ENCODE measurements at regions of chr7 and their contacts with region 1.

Region 1: DNA sequence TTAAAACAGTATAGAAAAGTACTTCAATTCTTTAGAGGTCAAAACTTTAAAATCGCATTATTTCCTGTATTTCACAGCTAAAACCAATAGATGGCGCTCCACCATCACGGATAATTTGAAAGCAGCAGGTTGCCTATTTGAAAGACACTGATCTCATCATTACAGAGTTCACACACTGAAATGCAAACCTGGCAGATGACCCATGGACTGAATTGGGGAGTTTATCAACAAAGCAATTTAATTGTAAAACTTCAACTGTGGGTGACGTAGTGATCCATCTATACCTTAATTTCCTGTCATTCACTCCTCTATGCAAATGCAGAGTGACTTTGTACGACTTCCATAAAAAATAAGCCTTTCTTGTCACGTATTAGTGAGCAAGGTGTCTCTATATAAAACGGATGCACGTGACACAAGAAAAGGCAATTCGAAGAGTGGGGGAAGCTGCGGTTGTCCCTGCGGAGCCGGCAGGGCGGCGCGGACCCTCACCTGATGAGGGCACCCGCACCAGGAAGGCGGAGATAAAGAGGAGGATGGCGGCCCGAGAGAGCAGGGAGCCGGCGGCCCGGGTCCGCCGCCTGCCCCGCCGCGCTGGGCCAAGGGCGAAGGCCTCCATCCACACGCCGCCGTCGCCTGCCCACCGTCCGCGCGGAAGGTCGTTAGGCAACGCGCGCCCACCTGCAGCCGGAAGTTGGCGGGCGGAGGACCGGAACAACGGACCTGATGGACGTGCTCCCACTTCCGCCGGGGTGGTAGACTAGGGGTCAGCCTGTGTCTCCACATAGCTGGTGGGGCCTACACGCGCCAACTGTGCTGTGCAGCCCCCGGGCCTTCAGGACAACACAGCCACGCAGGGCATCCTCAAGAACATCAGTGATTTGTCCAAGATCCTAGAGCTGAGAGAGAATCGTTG is at the start of gene ZPBP:
- DNase-seq: peak; percentile 59
- H3K4me3 Mint-ChIP-seq: peak within 1 kb of the TSS; percentile 75
- H3K27ac Mint-ChIP-seq: peak within 1 kb of the TSS; percentile 62
- H3K4me1 Mint-ChIP-seq: peaks cover 8% of the 10 kb centered on the region
- H3K27me3 Mint-ChIP-seq: no peaks in the 10 kb centered on the region
- total RNA-seq, gene ZPBP: not detected

Region 2: GRCh38 chr7:49911909-49912308 is 180.9 kb before region 1 on chr7:
- CTCF ChIA-PET with region 1: no interaction called
- POLR2A ChIA-PET with region 1: no interaction called
- intact Hi-C with region 1: no loop called
- DNase-seq: no peak
- H3K4me3 Mint-ChIP-seq: no peak overlapping the region
- H3K27ac Mint-ChIP-seq: no peak overlapping the region
- H3K4me1 Mint-ChIP-seq: no peaks in the 10 kb centered on the region
- H3K27me3 Mint-ChIP-seq: no peaks in the 10 kb centered on the region

Region 3: DNA sequence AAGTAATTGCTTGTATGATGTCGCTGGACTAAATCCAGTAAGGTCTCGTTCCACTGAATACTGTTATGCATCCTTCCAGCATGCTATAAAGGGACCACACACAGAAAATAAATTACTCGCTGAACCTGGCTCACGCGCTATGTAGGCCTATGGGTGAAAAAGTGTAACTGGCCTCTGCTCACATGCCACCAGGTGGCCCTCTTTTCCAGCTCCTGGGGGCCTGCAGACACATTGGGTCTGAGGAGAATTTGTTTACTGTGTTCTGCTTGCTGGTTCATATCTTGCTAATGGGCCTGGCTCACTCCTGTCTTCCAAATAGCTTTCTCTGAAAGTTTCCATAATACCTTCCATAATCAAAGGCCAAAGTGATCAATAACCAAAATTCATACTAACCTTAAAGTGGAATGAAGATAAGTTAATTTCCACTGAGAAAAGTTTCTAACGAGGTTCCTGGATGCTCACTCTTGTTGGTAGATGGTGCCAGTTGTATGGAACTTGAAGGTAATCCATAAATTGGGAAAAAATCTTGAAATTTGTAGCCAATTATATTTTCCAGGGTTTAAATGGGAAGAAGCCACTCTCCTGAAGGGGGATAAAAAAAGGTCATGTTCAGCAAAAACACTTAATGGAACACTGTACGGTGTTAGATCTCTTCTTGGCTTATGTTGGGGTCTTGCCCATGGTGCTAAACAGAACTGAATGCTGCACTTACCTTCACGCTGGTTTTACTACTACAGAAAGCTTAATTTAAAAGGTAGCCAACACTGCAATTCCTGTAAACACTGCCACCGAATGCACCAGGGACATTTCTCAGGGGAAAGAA is 27.2 kb after region 1 on chr7:
- CTCF ChIA-PET with region 1: interaction called, 14 read pairs
- POLR2A ChIA-PET with region 1: no interaction called
- intact Hi-C with region 1: no loop called
- DNase-seq: peak; percentile 51
- H3K4me3 Mint-ChIP-seq: no peak overlapping the region
- H3K27ac Mint-ChIP-seq: no peak overlapping the region
- H3K4me1 Mint-ChIP-seq: no peaks in the 10 kb centered on the region
- H3K27me3 Mint-ChIP-seq: peaks cover 6% of the 10 kb centered on the region

Region 4: GRCh38 chr7:50317221-50317678 is 224.4 kb after region 1 on chr7:
- CTCF ChIA-PET with region 1: interaction called, 4 read pairs
- POLR2A ChIA-PET with region 1: no interaction called
- intact Hi-C with region 1: loop called (anchors 5 kb)
- DNase-seq: peak; percentile 75
- H3K4me3 Mint-ChIP-seq: peak overlapping the region; percentile 86
- H3K27ac Mint-ChIP-seq: peak overlapping the region; percentile 94
- H3K4me1 Mint-ChIP-seq: peaks cover 92% of the 10 kb centered on the region
- H3K27me3 Mint-ChIP-seq: no peaks in the 10 kb centered on the region

Region 5: GRCh38 chr7:50418086-50418515 is 325.3 kb after region 1 on chr7:
- CTCF ChIA-PET with region 1: interaction called, 46 read pairs
- POLR2A ChIA-PET with region 1: no interaction called
- intact Hi-C with region 1: loop called (anchors 1 kb)
- DNase-seq: peak; percentile 87
- H3K4me3 Mint-ChIP-seq: no peak overlapping the region
- H3K27ac Mint-ChIP-seq: no peak overlapping the region
- H3K4me1 Mint-ChIP-seq: peaks cover 24% of the 10 kb centered on the region
- H3K27me3 Mint-ChIP-seq: no peaks in the 10 kb centered on the region

Region 6: GRCh38 chr7:50632561-50633413 is 540.0 kb after region 1 on chr7:
- CTCF ChIA-PET with region 1: interaction called, 10 read pairs
- POLR2A ChIA-PET with region 1: no interaction called
- intact Hi-C with region 1: loop called (anchors 1 kb)
- DNase-seq: peak; percentile 65
- H3K4me3 Mint-ChIP-seq: no peak overlapping the region
- H3K27ac Mint-ChIP-seq: no peak overlapping the region
- H3K4me1 Mint-ChIP-seq: peaks cover 7% of the 10 kb centered on the region
- H3K27me3 Mint-ChIP-seq: peaks cover 2% of the 10 kb centered on the region

Region 7: DNA sequence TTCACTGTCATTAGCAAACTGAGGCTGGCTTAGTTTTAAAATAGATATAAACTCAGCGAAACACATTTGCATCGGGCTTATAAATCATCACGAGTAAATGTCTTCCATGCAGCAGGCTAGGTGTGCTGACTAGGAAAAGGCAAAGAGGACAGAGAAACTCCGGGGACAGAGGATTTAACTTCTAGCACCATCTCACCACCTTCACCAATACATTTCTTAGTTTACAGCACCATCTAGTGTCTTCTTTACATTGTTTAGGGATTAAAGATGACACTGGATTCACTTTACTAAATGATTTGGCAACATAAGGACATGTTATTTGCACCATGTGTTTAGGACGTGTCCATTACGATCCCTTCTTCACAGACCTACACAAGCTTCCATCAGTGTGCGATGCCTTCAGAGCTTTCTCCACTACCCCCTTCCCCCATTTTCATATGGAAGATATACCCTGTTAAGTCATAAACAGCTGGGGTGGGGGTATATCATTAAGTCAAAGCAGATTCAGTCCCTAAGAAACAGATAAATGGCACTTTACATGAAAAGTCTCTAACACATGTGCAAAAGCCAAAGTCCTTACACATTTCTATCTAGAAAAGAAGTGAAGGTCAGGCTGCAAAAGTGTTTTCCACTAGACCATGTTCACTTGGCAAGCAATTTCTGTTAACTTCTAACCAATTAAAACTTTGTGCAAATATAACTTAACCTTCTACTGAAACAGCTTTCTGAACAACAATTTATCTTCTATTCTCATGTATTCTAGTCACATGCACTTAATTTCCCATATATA is 586.6 kb after region 1 on chr7:
- CTCF ChIA-PET with region 1: interaction called, 12 read pairs
- POLR2A ChIA-PET with region 1: no interaction called
- intact Hi-C with region 1: loop called (anchors 1 kb)
- DNase-seq: no peak
- H3K4me3 Mint-ChIP-seq: no peak overlapping the region
- H3K27ac Mint-ChIP-seq: no peak overlapping the region
- H3K4me1 Mint-ChIP-seq: no peaks in the 10 kb centered on the region
- H3K27me3 Mint-ChIP-seq: no peaks in the 10 kb centered on the region

Region 8: DNA sequence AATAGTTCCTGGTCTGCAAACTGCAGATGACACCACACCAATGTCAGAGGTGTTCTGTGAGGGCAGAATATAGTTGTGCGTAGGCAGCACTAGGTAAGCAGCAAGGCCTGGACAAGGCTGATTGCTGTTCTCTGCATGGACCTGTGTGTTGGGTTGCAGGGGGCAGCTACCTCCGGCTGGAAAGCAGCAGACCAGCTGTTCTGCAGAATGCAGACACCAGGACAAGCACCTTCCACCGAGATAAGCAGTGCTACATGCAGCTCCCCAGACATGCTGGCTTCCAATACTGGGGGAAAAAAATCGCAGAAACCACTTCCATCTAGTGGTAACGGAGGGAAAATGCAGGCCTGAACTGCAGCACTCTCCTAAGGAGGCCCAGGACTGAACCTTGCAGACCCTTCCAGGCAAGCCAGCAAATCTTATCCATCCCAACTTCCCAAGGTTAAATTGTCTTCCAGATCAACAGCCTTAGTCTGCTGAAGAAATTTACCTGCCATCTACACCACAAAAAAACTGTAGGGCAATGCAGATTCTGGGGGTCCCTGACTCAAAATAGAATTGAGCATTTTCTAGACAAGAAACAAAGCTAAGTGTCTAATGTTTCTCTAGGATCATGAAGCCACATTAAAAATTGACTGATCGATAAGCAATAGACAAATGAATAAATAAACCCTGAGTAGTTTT is 1274.2 kb after region 1 on chr7:
- CTCF ChIA-PET with region 1: no interaction called
- POLR2A ChIA-PET with region 1: no interaction called
- intact Hi-C with region 1: loop called (anchors 10 kb)
- DNase-seq: peak; percentile 12
- H3K4me3 Mint-ChIP-seq: no peak overlapping the region
- H3K27ac Mint-ChIP-seq: no peak overlapping the region
- H3K4me1 Mint-ChIP-seq: no peaks in the 10 kb centered on the region
- H3K27me3 Mint-ChIP-seq: no peaks in the 10 kb centered on the region